Activated CD8-positive, alpha-beta T cell treated with anti-CD3 and anti-CD28 coated beads for 36 hours (primary cell): ENCODE measurements at regions of chr16 and their contacts with region 1.

Region 1: DNA sequence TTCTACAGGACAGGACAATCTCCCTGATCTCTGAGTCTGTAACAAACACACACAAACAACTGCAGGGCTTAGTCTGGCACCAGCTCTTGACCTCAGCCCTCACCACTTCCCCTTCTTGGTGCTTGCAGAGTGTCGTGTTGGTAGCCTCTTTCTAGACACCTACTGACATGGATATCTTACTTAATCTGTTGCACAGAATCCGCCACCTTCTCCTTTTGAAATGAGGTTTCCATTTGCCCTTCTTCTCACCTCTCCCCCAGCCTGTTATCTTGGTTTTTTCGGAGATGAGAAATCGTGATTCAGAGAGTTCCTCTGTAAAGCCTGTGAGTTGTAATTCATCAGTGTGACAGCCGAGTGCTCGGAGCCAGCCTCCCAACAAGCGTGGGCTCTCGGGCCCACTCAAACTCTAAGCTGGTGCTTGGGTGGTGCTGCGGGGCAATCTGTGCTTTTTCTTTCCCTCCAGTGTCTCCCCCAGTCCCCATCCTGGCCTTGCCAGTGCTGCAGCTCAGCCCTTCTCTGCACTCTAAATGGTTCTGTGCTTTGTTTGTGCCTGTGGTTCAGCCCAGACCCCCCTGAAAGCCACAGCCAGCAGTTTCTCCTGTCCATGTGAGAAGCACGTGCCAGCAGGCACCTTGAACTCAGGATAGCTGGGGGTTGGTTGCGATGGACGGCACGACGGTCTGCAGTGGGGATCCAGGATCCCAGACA is 28.1 kb downstream of the KIAA0513 start:
- DNase-seq: peak; percentile 94
- ATAC-seq: peak; percentile 91
- H3K4me3 Mint-ChIP-seq: peak overlapping the region; percentile 72
- H3K27ac Mint-ChIP-seq: peak overlapping the region; percentile 91
- H3K4me1 Mint-ChIP-seq: peaks cover 45% of the 10 kb centered on the region
- H3K27me3 Mint-ChIP-seq: no peaks in the 10 kb centered on the region
- CTCF ChIP-seq: no peak

Region 2: GRCh38 chr16:85010931-85011845 is 44.5 kb before region 1 on chr16 and contains the start of gene ZDHHC7:
- CTCF ChIA-PET with region 1: interaction called, 7 read pairs
- POLR2A ChIA-PET with region 1: interaction called, 5 read pairs
- intact Hi-C with region 1: loop called (anchors 5 kb)
- DNase-seq: peak; percentile 89
- ATAC-seq: peak; percentile 97
- H3K4me3 Mint-ChIP-seq: peak within 1 kb of the TSS; percentile 96
- H3K27ac Mint-ChIP-seq: peak within 1 kb of the TSS; percentile 97
- H3K4me1 Mint-ChIP-seq: peaks cover 32% of the 10 kb centered on the region
- H3K27me3 Mint-ChIP-seq: no peaks in the 10 kb centered on the region
- CTCF ChIP-seq: no peak
- total RNA-seq, gene ZDHHC7: 20.7 to 23.6 TPM

Region 3: DNA sequence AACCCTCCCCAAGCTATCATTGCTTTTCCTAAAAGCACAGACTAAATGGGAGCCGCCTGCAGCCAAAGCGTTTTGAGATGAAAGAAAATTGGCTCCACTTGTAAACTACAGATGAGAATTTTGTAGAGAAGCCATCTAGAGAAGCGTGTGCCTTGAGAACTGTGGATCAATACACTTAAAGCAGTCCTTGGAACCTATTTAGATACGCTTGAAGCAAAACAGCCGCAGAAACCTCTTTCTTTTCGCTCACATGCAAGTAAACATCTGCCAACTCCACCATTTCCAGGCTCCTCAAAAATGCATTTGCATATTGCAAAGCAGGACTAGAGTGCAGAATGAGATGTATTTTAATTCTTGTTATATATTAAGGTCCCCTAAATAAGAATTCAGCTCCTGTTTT is 15.0 kb before region 1 on chr16:
- CTCF ChIA-PET with region 1: no interaction called
- POLR2A ChIA-PET with region 1: no interaction called
- intact Hi-C with region 1: no loop called
- DNase-seq: no peak
- ATAC-seq: no peak
- H3K4me3 Mint-ChIP-seq: no peak overlapping the region
- H3K27ac Mint-ChIP-seq: no peak overlapping the region
- H3K4me1 Mint-ChIP-seq: peaks cover 10% of the 10 kb centered on the region
- H3K27me3 Mint-ChIP-seq: no peaks in the 10 kb centered on the region
- CTCF ChIP-seq: no peak

Region 4: GRCh38 chr16:85286970-85287824 is 231.5 kb after region 1 on chr16:
- CTCF ChIA-PET with region 1: no interaction called
- POLR2A ChIA-PET with region 1: no interaction called
- intact Hi-C with region 1: no loop called
- DNase-seq: no peak
- ATAC-seq: no peak
- H3K4me3 Mint-ChIP-seq: no peak overlapping the region
- H3K27ac Mint-ChIP-seq: no peak overlapping the region
- H3K4me1 Mint-ChIP-seq: no peaks in the 10 kb centered on the region
- H3K27me3 Mint-ChIP-seq: no peaks in the 10 kb centered on the region
- CTCF ChIP-seq: no peak